ENCODE measurements at regions of chr20 and their contacts with region 1.

Region 1: GRCh38 chr20:49982346-49983122 is at the start of gene SNAI1:
- DNase-seq: no peak
- H3K4me3 ChIP-seq: peak within 1 kb of the TSS; percentile 58
- H3K27me3 ChIP-seq: no peaks in the 10 kb centered on the region
- CTCF ChIP-seq: peak; percentile 44
- polyA plus RNA-seq, gene SNAI1: 3.6 and 6.5 TPM in 2 replicates

Region 2: GRCh38 chr20:49964964-49965780 is 17.4 kb before region 1 on chr20:
- CTCF ChIA-PET with region 1: interaction called, 22 read pairs
- POLR2A ChIA-PET with region 1: no interaction called
- DNase-seq: no peak
- H3K4me3 ChIP-seq: no peak overlapping the region
- H3K27me3 ChIP-seq: no peaks in the 10 kb centered on the region
- CTCF ChIP-seq: peak; percentile 64

Region 3: GRCh38 chr20:50070991-50071888 is 88.7 kb after region 1 on chr20:
- CTCF ChIA-PET with region 1: interaction called, 590 read pairs
- POLR2A ChIA-PET with region 1: interaction called, 4 read pairs
- DNase-seq: no peak
- H3K4me3 ChIP-seq: peak overlapping the region; percentile 30
- H3K27me3 ChIP-seq: no peaks in the 10 kb centered on the region
- CTCF ChIP-seq: peak; percentile 99

Region 4: DNA sequence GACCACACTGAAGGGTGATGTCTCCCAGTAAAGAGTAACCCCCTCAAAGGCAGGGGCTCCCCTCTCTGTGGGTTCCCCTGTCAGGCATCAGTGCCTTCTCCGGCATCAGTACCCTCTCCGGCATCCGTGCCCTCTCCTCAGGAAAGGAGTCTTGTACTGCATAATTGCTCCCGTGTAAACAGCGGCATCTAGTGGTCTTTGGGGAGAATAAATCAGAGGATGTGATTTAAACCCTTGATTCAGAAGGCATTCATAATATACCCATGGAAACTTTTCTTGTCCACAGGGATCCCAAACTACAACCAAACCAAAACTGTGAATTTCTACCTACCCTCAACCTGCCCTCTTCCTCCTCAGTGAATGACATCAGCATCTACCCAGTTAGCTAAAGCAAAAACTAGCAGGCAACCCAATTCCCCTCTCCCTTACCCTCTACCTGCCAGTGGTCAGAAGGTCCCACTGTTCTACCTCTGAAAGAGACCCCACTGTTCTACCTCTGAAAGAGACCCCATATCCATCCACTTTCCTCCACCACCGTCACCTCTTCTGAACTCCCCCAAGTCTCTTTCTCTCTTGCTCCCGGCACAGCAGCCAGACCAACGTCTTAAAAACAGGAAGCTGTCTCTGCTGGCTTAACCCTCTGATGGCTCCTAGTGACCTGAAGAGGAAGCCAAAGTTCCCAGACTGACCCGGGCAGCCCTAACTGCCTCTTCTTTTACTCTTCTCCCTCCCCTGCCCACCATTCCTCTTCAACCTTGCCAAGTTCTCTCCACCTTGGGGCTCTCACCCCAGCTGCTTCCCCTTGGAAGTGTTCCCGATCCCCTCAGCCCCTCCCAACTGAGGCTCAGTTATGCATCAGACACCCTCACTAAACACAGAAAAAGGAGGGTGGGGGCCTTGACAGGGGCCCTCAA is 103.2 kb after region 1 on chr20:
- CTCF ChIA-PET with region 1: interaction called, 34 read pairs
- POLR2A ChIA-PET with region 1: no interaction called
- DNase-seq: no peak
- H3K4me3 ChIP-seq: no peak overlapping the region
- H3K27me3 ChIP-seq: no peaks in the 10 kb centered on the region
- CTCF ChIP-seq: peak; percentile 84

Region 5: DNA sequence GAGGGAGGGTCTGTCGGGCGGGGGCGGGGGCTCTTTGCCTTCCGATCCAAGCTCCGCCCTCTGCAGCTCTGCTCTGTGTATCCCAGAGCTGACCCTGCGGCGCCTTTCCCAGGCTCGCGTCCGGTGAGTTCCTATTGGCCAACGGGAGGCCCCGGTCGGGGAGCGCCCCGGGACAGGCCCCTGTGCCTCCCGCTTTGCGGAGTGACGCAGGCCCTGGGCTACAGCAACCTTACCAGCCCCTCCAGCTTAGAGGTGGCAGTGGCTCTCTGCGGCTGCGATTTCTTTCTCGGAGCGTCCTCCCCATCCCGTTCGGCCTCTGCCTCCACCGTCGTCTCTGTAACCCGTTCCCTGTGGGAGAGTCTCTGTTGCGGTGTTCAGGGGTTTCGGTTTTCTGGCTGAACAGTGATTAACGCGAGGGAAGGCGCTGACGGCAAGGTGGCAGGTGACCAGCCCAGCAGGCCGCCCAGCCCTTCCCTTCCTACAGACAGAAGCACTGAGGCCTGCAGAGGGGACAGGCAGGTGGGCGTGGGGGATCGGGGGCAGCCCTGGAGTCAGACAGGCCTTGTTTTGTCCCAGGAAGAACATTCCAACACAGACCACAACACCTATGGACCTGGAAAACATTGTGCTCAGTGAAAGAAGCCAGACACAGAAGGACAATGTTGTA is 189.9 kb after region 1 on chr20:
- CTCF ChIA-PET with region 1: interaction called, 32 read pairs
- POLR2A ChIA-PET with region 1: no interaction called
- DNase-seq: no peak
- H3K4me3 ChIP-seq: peak overlapping the region; percentile 34
- H3K27me3 ChIP-seq: no peaks in the 10 kb centered on the region
- CTCF ChIP-seq: no peak

Region 6: GRCh38 chr20:50179507-50180016 is 197.0 kb after region 1 on chr20:
- CTCF ChIA-PET with region 1: interaction called, 18 read pairs
- POLR2A ChIA-PET with region 1: no interaction called
- DNase-seq: no peak
- H3K4me3 ChIP-seq: no peak overlapping the region
- H3K27me3 ChIP-seq: no peaks in the 10 kb centered on the region
- CTCF ChIP-seq: no peak